ENCODE measurements at regions of chr10 and their contacts with region 1.

Region 1: DNA sequence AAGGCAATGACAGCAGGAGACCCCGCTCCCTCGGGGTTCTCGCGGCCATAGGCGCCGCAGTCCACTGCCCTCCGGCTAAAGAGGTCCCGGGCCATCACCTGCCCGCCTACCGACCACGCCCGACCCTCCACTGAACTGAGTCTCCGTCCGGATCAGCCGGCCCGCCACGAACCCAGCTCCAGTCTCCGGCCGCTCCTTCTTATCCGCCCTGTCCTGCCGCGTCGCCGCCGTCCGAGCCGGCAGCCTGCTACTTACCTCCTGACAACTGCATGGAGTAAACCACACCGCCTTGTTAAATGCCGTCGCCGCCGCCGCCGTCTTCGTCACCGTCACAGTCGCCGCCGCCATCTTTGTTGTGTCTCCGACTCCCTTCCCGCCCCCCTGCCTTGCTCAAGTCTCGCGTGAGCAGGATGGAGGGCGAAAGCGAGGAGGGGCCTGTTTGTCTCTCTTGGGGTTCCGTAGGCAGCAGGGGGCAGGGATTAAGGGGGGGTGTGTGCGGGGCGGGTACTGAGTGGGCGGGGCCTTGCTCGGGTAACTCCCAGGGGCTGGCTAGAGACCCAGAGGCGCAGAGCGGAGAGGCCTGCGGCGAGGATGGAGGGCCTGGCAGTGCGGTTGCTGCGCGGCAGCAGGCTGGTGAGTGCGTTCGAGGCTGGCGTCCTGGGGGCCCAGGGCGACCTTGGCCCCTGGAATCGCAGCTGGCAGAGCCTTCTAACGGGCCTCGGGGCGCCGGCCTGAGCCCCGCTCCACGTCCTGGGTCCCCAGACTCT is at the starts of genes ACADSB and IKZF5:
- DNase-seq: peak; percentile 92
- ATAC-seq: peak; percentile 95
- H3K4me3 ChIP-seq: peak within 1 kb of the TSS; percentile 99
- H3K27ac ChIP-seq: peak within 1 kb of the TSS; percentile 81
- H3K4me1 ChIP-seq: no peaks in the 10 kb centered on the region
- H3K27me3 ChIP-seq: no peaks in the 10 kb centered on the region
- CTCF ChIP-seq: no peak
- EP300 ChIP-seq: no peak
- POLR2A ChIP-seq: peak; percentile 99
- RAD21 ChIP-seq: no peak
- polyA plus RNA-seq, gene ACADSB: 10.9 to 11.3 TPM
- polyA plus RNA-seq, gene IKZF5: 6.8 to 11.2 TPM

Region 2: DNA sequence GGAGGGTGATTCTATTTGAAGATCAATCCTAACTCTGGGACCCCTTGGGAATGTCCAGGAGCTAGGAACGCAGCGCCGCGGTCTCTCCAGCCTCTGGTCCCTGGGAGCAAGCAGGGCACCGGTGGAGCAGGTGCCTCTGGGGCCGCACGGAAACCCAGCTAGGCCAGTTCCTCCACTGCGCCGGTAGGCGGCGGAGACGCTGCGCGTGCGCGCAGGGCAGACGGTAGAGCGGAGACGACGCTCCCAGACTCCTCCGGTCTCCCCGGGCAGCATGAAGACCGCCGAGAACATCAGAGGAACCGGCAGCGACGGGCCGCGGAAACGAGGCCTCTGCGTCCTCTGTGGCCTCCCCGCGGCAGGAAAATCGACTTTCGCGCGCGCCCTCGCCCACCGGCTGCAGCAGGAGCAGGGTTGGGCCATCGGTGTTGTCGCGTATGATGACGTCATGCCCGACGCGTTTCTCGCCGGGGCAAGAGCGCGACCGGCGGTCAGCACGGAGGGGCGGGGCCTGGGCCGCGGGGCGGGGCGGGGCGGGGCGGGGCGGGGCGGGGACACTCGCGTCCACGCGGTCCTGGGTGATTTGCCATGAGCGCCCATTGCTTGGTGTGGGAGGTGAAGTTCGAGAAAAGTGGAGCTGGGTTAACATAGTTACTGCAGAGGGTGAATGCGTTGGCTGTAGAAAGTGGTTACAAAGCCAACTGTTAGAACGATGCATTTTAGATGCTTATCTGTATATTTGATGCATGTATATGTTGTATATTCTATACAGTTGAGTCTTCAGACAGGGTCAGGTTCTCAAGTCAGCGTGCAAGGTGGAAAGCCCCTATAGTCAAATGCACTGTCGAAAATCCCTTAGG is 28.2 kb before region 1 on chr10 and contains the start of gene PSTK:
- CTCF ChIA-PET with region 1: interaction called, 38 read pairs
- POLR2A ChIA-PET with region 1: interaction called, 21 read pairs
- RAD21 ChIA-PET with region 1: interaction called, 21 read pairs
- SMC1A ChIA-PET with region 1: interaction called, 8 read pairs
- in situ Hi-C with region 1: no loop called
- intact Hi-C with region 1: no loop called
- DNase-seq: peak; percentile 66
- ATAC-seq: peak; percentile 98
- H3K4me3 ChIP-seq: peak within 1 kb of the TSS; percentile 69
- H3K27ac ChIP-seq: peak within 1 kb of the TSS; percentile 95
- H3K4me1 ChIP-seq: peaks cover 4% of the 10 kb centered on the region
- H3K27me3 ChIP-seq: no peaks in the 10 kb centered on the region; a peak in 1 of 4 replicates
- CTCF ChIP-seq: peak; percentile 93 to 98 (median 96)
- EP300 ChIP-seq: no peak
- POLR2A ChIP-seq: peak; percentile 97
- RAD21 ChIP-seq: peak; percentile 24; the same call in 1 of the 2 replicates
- polyA plus RNA-seq, gene PSTK: 1.8 to 3.3 TPM